BJ (cell line): ENCODE measurements at regions of chr12 and their contacts with region 1.

Region 1: GRCh38 chr12:49515266-49515665 is 23.6 kb upstream of the KCNH3 start:
- DNase-seq: peak; percentile 13
- H3K4me3 ChIP-seq: no peak overlapping the region
- H3K27me3 ChIP-seq: no peaks in the 10 kb centered on the region
- CTCF ChIP-seq: no peak

Region 2: DNA sequence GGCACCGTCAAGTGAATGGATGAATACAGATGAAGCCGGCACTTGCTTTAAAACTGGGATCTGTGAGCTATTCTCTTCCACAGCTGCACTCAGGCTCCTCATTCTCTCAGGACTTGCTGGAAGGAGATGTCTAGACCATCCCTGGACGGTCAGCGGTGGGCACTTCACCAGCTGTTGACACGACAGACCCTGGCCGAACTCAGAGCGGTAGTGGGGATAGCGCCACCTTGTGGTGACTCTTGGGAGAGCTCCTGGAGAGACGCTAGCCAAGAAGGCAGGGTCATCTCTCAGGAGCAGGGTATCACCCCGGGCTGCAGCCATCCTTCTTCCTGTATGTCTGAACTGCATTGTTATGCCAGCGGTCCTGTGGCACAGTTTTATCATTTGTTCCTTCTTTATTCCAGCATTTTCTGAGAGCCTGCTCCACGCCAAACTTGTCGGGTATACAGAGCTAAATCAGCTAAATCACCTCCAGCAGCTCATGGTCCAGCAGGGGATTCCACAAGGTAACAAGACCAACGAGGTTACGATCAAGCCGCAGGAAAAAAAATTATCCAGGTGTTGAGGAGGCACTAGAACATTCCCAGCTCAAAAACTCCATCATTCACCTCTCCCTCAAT is 527.1 kb before region 1 on chr12:
- CTCF ChIA-PET with region 1: no interaction called
- POLR2A ChIA-PET with region 1: no interaction called
- DNase-seq: no peak
- H3K4me3 ChIP-seq: no peak overlapping the region
- H3K27me3 ChIP-seq: peaks cover 37% of the 10 kb centered on the region
- CTCF ChIP-seq: peak; percentile 90

Region 3: GRCh38 chr12:49170924-49171323 is 344.3 kb before region 1 on chr12:
- CTCF ChIA-PET with region 1: no interaction called
- POLR2A ChIA-PET with region 1: no interaction called
- DNase-seq: no peak
- H3K4me3 ChIP-seq: no peak overlapping the region
- H3K27me3 ChIP-seq: no peaks in the 10 kb centered on the region
- CTCF ChIP-seq: no peak

Region 4: GRCh38 chr12:49288412-49288853 is 226.8 kb before region 1 on chr12:
- CTCF ChIA-PET with region 1: interaction called, 15 read pairs
- POLR2A ChIA-PET with region 1: no interaction called
- DNase-seq: no peak
- H3K4me3 ChIP-seq: no peak overlapping the region
- H3K27me3 ChIP-seq: peaks cover 8% of the 10 kb centered on the region
- CTCF ChIP-seq: peak; percentile 82

Region 5: GRCh38 chr12:49342066-49342913 is 173.0 kb before region 1 on chr12:
- CTCF ChIA-PET with region 1: interaction called, 58 read pairs
- POLR2A ChIA-PET with region 1: no interaction called
- DNase-seq: no peak
- H3K4me3 ChIP-seq: peak overlapping the region; percentile 29
- H3K27me3 ChIP-seq: peaks cover 60% of the 10 kb centered on the region
- CTCF ChIP-seq: peak; percentile 86

Region 6: GRCh38 chr12:49347384-49348237 is 167.7 kb before region 1 on chr12:
- CTCF ChIA-PET with region 1: interaction called, 58 read pairs
- POLR2A ChIA-PET with region 1: no interaction called
- DNase-seq: no peak
- H3K4me3 ChIP-seq: peak overlapping the region; percentile 31
- H3K27me3 ChIP-seq: peaks cover 34% of the 10 kb centered on the region
- CTCF ChIP-seq: peak; percentile 95

Region 7: DNA sequence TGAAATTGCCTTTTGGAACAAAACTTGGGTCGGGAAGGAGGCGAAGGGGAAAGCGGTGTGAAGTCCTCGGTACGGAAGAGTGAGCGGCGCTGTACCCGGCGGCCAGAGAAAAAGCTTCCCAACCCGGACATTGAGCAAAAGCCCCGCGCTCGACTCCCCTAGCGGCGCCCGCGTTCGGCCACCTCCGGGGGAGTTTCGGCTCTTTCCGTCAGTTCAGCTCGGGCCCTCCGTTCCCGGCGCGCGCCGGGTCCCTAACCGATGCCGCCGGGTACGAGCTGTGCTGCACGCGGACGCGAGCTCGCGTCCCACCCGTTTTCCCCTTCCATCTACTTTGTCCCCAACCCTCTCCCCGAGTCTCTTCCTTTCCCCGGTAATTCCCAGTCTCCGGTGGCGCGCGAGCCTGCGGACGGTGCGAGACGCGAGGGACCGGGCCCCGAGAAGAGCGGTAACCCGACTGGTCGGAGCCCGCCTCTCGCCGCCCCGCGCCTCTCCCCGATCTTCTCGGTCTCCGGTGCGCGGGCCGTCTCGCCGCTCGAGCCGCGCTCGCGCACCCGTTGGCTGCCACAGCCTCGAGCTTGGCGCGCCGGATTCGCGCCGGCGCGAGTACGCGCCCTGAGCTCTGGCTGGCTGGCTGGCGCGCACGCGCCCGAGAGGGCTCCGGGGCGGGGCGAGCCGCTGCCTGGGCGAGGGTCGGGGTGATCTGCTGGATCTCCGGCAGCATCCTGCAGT is 148.4 kb before region 1 on chr12:
- CTCF ChIA-PET with region 1: interaction called, 63 read pairs
- POLR2A ChIA-PET with region 1: no interaction called
- DNase-seq: peak; percentile 70
- H3K4me3 ChIP-seq: peak overlapping the region; percentile 73
- H3K27me3 ChIP-seq: no peaks in the 10 kb centered on the region
- CTCF ChIP-seq: peak; percentile 41

Region 8: GRCh38 chr12:49534731-49535278 is 19.5 kb after region 1 on chr12:
- CTCF ChIA-PET with region 1: interaction called, 14 read pairs
- POLR2A ChIA-PET with region 1: no interaction called
- DNase-seq: no peak
- H3K4me3 ChIP-seq: no peak overlapping the region
- H3K27me3 ChIP-seq: peaks cover 15% of the 10 kb centered on the region
- CTCF ChIP-seq: no peak

Region 9: GRCh38 chr12:49580572-49581535 is 65.6 kb after region 1 on chr12:
- CTCF ChIA-PET with region 1: interaction called, 15 read pairs
- POLR2A ChIA-PET with region 1: no interaction called
- DNase-seq: no peak
- H3K4me3 ChIP-seq: no peak overlapping the region
- H3K27me3 ChIP-seq: no peaks in the 10 kb centered on the region
- CTCF ChIP-seq: peak; percentile 95

Region 10: GRCh38 chr12:49609746-49610089 is 94.5 kb after region 1 on chr12:
- CTCF ChIA-PET with region 1: no interaction called
- POLR2A ChIA-PET with region 1: no interaction called
- DNase-seq: no peak
- H3K4me3 ChIP-seq: no peak overlapping the region
- H3K27me3 ChIP-seq: no peaks in the 10 kb centered on the region
- CTCF ChIP-seq: peak; percentile 13; the same call in 1 of the 2 replicates